ENCODE measurements at regions of chr5 and their contacts with region 1.

Region 1: DNA sequence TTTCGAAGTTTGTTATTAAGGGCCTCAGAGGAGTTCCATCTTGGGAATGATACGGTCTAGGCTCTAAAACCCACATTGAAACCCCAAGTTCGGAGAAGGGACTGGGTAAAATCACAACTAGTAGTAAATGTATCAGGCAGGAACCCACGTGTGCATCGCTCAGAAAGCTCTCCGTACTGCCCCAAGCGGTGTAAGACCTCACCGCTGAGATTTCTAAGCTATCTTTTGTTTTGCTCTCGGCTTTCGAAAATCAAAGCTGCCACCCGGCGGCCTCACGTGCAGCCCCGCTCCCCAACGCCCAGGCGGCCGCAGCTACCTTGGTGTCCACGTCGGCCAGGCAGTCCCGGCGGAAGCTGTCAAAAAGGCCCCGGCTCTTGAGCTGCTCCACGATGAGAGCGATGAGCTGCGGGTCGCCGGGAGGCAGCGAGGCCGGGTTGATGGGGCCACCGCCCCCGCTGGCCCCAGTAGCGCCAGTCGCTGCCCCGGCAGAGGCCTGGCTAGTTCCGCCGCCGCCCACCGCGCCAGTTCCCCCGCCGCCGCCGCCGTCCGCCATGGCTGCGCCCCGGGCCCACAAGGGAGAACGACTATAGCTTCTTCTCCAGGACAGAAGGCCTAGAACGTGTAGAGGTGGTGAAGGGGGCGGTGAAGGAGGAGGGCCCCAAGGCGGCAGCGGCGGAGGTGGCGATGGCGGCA is 420 bp downstream of the BOD1 start:
- DNase-seq: peak; percentile 54
- H3K4me3 ChIP-seq: peak overlapping the region; percentile 76
- H3K27ac ChIP-seq: peak overlapping the region; percentile 92
- H3K27me3 ChIP-seq: no peaks in the 10 kb centered on the region
- CTCF ChIP-seq: peak; percentile 77

Region 2: DNA sequence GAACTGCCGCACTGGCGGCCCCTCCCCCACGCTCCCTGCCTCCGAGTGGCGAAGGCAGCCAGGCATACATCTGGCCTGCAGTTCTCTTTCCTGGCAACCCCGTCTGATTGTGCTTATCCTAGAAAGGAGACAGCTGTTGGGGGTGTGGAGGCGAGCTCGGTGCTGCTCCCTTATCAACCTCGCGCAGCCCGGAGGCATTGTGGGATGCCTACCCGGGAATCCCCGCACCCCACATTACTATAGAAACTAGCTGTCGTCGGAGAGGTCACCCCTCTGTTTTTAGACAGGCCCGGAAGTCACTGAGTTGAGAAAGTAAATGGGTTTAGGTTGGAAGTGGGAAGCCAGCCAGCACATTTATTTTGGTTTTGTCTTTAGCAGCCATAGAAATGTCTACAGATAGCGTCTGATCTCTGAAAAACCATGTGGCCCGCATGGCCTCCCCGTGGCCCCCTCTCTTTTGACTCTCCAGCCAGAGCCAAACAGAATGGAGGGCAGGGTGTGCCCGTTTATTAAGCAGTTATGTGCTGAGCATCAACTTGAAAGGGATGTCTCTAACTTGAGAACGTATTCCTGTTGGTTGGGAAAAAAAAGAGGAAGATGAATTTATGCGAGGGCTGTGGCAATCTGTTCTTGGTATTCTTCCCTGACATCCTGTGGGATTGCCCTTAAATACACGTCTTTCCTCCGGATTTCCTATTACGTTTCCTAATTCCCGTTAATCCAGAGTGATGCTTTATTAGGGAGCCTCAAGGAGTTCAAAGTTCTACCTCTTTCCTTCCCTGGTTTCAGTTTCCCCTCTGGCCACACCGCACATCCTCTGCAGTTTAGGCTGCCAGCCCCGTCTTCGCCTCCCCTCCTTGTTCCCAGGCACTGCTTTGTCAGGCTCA is 291.7 kb before region 1 on chr5:
- CTCF ChIA-PET with region 1: interaction called, 28 read pairs
- POLR2A ChIA-PET with region 1: interaction called, 8 read pairs
- DNase-seq: peak; percentile 90
- H3K4me3 ChIP-seq: peak overlapping the region; percentile 96
- H3K27ac ChIP-seq: peak overlapping the region; percentile 73
- H3K27me3 ChIP-seq: no peaks in the 10 kb centered on the region
- CTCF ChIP-seq: no peak

Region 3: DNA sequence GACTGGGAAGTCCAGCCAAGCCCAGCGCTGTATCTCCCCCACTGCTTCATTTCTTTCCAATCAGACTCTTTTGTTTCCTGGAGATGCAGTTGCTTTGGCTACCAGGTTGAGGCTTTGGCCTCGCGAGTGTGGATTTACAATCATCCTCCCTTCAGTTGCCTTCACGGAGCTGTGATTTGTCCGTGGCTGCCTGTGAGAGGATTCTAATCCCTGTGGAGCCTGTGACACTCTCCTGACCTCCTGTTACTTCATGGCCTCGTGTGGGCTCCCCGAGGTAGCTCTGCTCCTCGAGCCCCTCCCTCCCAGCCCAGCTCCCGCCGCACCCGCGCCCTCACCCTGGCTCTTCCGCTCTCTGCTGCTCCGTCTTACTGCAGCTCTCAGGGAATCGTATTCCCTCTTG is 180.6 kb before region 1 on chr5:
- CTCF ChIA-PET with region 1: no interaction called
- POLR2A ChIA-PET with region 1: no interaction called
- DNase-seq: no peak
- H3K4me3 ChIP-seq: no peak overlapping the region
- H3K27ac ChIP-seq: no peak overlapping the region
- H3K27me3 ChIP-seq: no peaks in the 10 kb centered on the region
- CTCF ChIP-seq: no peak

Region 4: DNA sequence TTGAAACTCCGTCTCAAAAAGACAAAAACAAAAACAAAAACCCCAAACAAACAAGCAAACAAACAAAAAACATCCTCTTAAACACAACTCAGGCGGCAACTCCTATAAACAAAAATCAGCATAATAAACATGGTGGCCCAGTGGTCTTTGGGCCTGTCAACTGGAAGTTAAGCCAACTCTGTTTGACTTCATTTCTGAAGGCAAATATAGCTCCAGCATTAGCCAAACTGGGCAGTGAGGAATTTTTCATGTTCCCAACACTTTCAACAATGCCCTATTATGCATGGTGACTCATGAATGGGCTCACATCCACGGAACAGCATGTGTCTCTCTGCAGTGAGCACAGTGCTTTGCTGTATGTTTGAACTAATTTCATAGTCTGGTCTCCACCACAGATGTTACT is 143.9 kb before region 1 on chr5:
- CTCF ChIA-PET with region 1: no interaction called
- POLR2A ChIA-PET with region 1: no interaction called
- DNase-seq: peak; percentile 93
- H3K4me3 ChIP-seq: no peak overlapping the region
- H3K27ac ChIP-seq: peak overlapping the region; percentile 87
- H3K27me3 ChIP-seq: no peaks in the 10 kb centered on the region
- CTCF ChIP-seq: no peak

Region 5: GRCh38 chr5:173602423-173602822 is 13.6 kb before region 1 on chr5:
- CTCF ChIA-PET with region 1: interaction called, 16 read pairs
- POLR2A ChIA-PET with region 1: interaction called, 7 read pairs
- DNase-seq: no peak
- H3K4me3 ChIP-seq: no peak overlapping the region
- H3K27ac ChIP-seq: no peak overlapping the region
- H3K27me3 ChIP-seq: no peaks in the 10 kb centered on the region
- CTCF ChIP-seq: no peak

Region 6: GRCh38 chr5:173707392-173707791 is 91.4 kb after region 1 on chr5:
- CTCF ChIA-PET with region 1: no interaction called
- POLR2A ChIA-PET with region 1: no interaction called
- DNase-seq: no peak
- H3K4me3 ChIP-seq: no peak overlapping the region
- H3K27ac ChIP-seq: no peak overlapping the region
- H3K27me3 ChIP-seq: peaks cover 4% of the 10 kb centered on the region
- CTCF ChIP-seq: no peak

Region 7: DNA sequence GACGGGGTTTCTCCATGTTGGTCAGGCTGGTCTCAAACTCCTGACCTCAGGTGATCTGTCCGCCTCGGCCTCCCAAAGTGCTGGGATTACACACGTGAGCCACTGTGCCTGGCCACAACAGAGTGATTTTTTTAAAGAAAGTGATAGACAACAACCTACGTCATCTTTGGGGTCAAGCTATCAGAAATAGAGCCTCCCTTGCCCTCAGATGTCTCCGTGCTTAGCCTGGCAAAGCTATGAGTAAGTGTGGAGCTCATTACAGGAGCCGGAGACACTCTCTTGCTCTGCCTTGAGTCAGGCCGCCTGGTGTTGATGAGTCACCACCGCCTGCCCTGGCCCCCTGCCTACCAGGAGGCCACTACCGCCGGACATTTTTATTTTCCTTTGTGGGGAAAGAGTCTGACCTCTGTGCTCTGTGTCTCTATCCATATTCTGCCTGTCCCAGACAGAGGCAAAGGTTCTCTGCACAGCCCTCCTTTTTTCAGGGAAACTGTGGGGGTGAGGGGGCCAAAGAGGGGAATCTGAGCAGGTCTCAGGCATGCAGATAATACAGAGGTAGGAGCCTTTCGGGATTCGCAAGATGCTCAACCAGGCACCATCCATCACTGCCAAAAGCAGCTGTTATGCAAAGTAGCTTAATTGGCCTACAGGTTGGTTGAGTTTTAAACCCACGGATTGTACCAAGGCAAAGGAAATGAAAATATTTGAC is 148.4 kb after region 1 on chr5:
- CTCF ChIA-PET with region 1: no interaction called
- POLR2A ChIA-PET with region 1: no interaction called
- DNase-seq: peak; percentile 89
- H3K4me3 ChIP-seq: no peak overlapping the region
- H3K27ac ChIP-seq: peak overlapping the region; percentile 85
- H3K27me3 ChIP-seq: peaks cover 6% of the 10 kb centered on the region
- CTCF ChIP-seq: no peak

Region 8: GRCh38 chr5:173963867-173964441 is 347.9 kb after region 1 on chr5:
- CTCF ChIA-PET with region 1: interaction called, 21 read pairs
- POLR2A ChIA-PET with region 1: interaction called, 4 read pairs
- DNase-seq: no peak
- H3K4me3 ChIP-seq: no peak overlapping the region
- H3K27ac ChIP-seq: peak overlapping the region; percentile 69
- H3K27me3 ChIP-seq: no peaks in the 10 kb centered on the region
- CTCF ChIP-seq: no peak

Region 9: DNA sequence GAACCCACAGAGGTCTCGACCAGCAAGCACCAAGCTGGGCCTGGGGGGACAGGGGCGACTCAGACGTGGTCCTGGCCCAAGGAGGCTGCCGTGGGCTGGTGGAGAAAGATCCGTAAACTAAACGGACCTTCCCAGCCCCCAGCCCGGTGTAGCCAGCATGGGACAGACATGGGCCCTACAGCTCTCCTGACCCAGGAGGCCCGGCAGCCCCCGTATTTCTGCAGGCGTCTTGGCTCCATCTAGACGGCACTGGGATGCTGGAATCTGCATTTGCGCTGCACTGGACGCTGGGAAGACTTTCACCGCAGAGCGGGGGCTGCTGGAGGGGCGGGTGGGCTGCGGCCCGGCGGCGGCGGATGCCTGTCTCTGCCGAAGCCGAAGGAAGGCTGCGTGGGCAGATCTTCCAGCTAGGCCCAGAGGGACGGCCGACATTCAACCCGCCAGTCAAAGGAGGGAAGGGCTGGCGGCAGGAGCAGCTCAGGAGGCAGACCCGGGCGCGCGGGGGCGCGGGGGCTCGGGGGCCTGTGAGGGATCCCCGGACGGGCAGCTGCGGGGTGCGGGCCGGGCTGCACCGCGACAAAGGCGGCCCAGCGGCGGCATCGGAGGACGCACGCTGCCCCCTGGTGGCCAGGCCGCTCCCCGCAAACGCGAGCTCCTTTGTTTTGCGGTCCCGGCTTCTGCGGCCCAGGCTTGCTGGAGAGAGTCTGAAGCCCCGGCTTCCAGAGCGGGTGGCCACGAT is 695.7 kb after region 1 on chr5:
- CTCF ChIA-PET with region 1: interaction called, 41 read pairs
- POLR2A ChIA-PET with region 1: interaction called, 5 read pairs
- DNase-seq: no peak
- H3K4me3 ChIP-seq: peak overlapping the region; percentile 47
- H3K27ac ChIP-seq: no peak overlapping the region
- H3K27me3 ChIP-seq: peaks cover 13% of the 10 kb centered on the region
- CTCF ChIP-seq: peak; percentile 75

Measured in AG04450 (cell line).